Activated CD8-positive, alpha-beta T cell treated with anti-CD3 and anti-CD28 coated beads for 36 hours (primary cell): ENCODE measurements at regions of chr11 and their contacts with region 1.

Region 1: GRCh38 chr11:46529095-46529905 is 64.5 kb downstream of the AMBRA1 start:
- DNase-seq: peak; percentile 94
- ATAC-seq: peak; percentile 99
- H3K4me3 Mint-ChIP-seq: no peak overlapping the region
- H3K27ac Mint-ChIP-seq: peak overlapping the region; percentile 37
- H3K4me1 Mint-ChIP-seq: peaks cover 33% of the 10 kb centered on the region
- H3K27me3 Mint-ChIP-seq: no peaks in the 10 kb centered on the region
- CTCF ChIP-seq: peak; percentile 89

Region 2: GRCh38 chr11:46392421-46393230 is 136.7 kb before region 1 on chr11:
- CTCF ChIA-PET with region 1: interaction called, 25 read pairs
- POLR2A ChIA-PET with region 1: no interaction called
- intact Hi-C with region 1: no loop called
- DNase-seq: peak; percentile 81
- ATAC-seq: peak; percentile 85
- H3K4me3 Mint-ChIP-seq: peak overlapping the region; percentile 65
- H3K27ac Mint-ChIP-seq: no peak overlapping the region
- H3K4me1 Mint-ChIP-seq: peaks cover 24% of the 10 kb centered on the region
- H3K27me3 Mint-ChIP-seq: peaks cover 41% of the 10 kb centered on the region
- CTCF ChIP-seq: no peak

Region 3: GRCh38 chr11:46489661-46490560 is 39.4 kb before region 1 on chr11:
- CTCF ChIA-PET with region 1: interaction called, 51 read pairs
- POLR2A ChIA-PET with region 1: interaction called, 4 read pairs
- intact Hi-C with region 1: loop called (anchors 5 kb)
- DNase-seq: peak; percentile 54
- ATAC-seq: peak; percentile 76
- H3K4me3 Mint-ChIP-seq: no peak overlapping the region
- H3K27ac Mint-ChIP-seq: no peak overlapping the region
- H3K4me1 Mint-ChIP-seq: peaks cover 3% of the 10 kb centered on the region
- H3K27me3 Mint-ChIP-seq: no peaks in the 10 kb centered on the region
- CTCF ChIP-seq: peak; percentile 71

Region 4: DNA sequence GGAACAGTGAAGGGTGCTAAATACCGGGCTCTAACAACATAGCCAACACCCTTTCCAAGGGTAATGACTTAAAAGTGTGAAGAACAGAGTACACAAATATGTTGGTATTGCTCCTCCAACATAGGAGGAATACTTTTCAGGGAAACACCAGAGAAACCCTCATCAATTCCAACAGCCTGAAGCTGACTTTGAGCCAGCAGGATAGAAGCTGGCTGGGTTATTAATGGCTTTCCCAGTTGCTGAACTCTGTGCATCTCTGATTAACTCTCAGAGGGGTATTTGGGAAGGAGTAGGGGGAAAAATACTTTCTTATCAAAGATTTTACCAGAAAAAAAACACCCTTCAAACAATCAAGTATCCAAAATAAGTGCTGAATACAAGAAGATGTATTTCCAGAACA is 31.1 kb before region 1 on chr11:
- CTCF ChIA-PET with region 1: interaction called, 51 read pairs
- POLR2A ChIA-PET with region 1: no interaction called
- intact Hi-C with region 1: loop called (anchors 5 kb)
- DNase-seq: no peak
- ATAC-seq: no peak
- H3K4me3 Mint-ChIP-seq: no peak overlapping the region
- H3K27ac Mint-ChIP-seq: no peak overlapping the region
- H3K4me1 Mint-ChIP-seq: no peaks in the 10 kb centered on the region
- H3K27me3 Mint-ChIP-seq: no peaks in the 10 kb centered on the region
- CTCF ChIP-seq: no peak

Region 5: DNA sequence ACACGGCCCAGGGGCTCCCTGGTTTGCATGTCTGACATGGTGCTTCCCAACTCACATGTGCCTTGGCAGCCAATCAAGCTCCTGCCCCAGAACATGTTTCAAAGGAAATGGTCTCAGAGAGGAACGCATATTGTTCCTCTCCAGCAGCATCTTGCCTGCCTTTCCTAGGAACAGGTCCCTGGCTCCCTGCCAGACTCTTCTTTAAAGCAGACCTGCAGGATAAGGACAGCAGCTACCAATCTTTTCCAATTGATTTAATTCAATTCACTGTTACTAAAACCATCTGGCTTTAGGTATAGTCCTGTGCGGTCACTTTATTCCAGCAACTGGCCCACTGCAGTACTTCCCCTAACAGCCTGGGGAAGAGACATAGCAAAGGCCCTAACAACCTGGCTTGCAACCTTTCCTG is 15.4 kb before region 1 on chr11:
- CTCF ChIA-PET with region 1: interaction called, 12 read pairs
- POLR2A ChIA-PET with region 1: no interaction called
- intact Hi-C with region 1: no loop called
- DNase-seq: no peak
- ATAC-seq: no peak
- H3K4me3 Mint-ChIP-seq: no peak overlapping the region
- H3K27ac Mint-ChIP-seq: no peak overlapping the region
- H3K4me1 Mint-ChIP-seq: peaks cover 7% of the 10 kb centered on the region
- H3K27me3 Mint-ChIP-seq: no peaks in the 10 kb centered on the region
- CTCF ChIP-seq: no peak

Region 6: GRCh38 chr11:46554205-46555055 is 25.1 kb after region 1 on chr11:
- CTCF ChIA-PET with region 1: interaction called, 13 read pairs
- POLR2A ChIA-PET with region 1: interaction called, 3 read pairs
- intact Hi-C with region 1: no loop called
- DNase-seq: no peak
- ATAC-seq: no peak
- H3K4me3 Mint-ChIP-seq: no peak overlapping the region
- H3K27ac Mint-ChIP-seq: peak overlapping the region; percentile 3
- H3K4me1 Mint-ChIP-seq: peaks cover 47% of the 10 kb centered on the region
- H3K27me3 Mint-ChIP-seq: no peaks in the 10 kb centered on the region
- CTCF ChIP-seq: no peak

Region 7: DNA sequence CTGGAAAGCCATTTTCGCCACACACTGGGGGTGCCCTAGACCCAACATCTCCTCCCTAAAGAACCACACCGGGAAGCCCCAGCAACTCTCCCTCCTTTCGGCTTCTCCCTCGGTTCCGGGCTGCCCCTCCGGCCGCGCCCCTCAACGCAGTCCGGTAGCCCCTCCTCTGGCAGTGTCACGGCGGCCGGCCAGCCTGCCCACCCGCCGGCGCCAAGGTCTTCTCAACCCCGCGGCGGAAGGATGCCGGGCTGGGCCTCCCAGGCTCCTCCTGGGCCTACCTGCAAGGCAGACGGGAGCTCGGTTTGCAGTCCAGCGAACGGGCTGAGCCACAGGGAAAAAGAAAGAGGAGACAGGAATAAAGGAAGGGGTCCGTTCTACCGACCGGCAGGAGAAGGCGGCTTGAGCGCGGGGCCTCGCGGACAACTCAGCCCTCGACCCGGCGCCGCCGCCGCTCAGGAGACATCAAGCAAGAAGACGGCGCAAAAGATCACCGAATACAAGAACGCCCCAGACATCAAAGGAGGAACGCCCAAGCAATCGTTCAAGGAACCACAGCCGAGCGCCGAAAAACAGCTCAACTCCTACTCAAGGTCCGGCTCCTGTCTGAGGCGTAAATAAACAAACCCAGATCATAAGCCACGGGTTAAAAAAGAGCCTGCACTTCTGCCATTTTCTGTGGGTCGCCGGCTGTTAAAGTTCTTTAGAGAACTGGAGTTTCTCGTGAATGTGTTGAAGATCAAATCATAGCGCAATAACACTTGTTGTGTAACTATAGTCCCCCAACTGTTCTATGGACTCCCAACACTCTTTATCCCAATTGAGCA is 64.5 kb after region 1 on chr11 and contains the start of gene AMBRA1:
- CTCF ChIA-PET with region 1: interaction called, 11 read pairs
- POLR2A ChIA-PET with region 1: no interaction called
- intact Hi-C with region 1: no loop called
- DNase-seq: peak; percentile 95
- ATAC-seq: peak; percentile 92
- H3K4me3 Mint-ChIP-seq: peak within 1 kb of the TSS; percentile 97
- H3K27ac Mint-ChIP-seq: peak within 1 kb of the TSS; percentile 95
- H3K4me1 Mint-ChIP-seq: peaks cover 36% of the 10 kb centered on the region
- H3K27me3 Mint-ChIP-seq: no peaks in the 10 kb centered on the region
- CTCF ChIP-seq: no peak
- total RNA-seq, gene AMBRA1: 24.0 to 24.1 TPM

Region 8: GRCh38 chr11:46603704-46604308 is 74.5 kb after region 1 on chr11:
- CTCF ChIA-PET with region 1: no interaction called
- POLR2A ChIA-PET with region 1: no interaction called
- intact Hi-C with region 1: no loop called
- DNase-seq: no peak
- ATAC-seq: no peak
- H3K4me3 Mint-ChIP-seq: no peak overlapping the region
- H3K27ac Mint-ChIP-seq: no peak overlapping the region
- H3K4me1 Mint-ChIP-seq: no peaks in the 10 kb centered on the region
- H3K27me3 Mint-ChIP-seq: no peaks in the 10 kb centered on the region
- CTCF ChIP-seq: no peak

Region 9: GRCh38 chr11:46677991-46678740 is 148.9 kb after region 1 on chr11:
- CTCF ChIA-PET with region 1: no interaction called
- POLR2A ChIA-PET with region 1: no interaction called
- intact Hi-C with region 1: no loop called
- DNase-seq: no peak
- ATAC-seq: peak; percentile 29
- H3K4me3 Mint-ChIP-seq: no peak overlapping the region
- H3K27ac Mint-ChIP-seq: no peak overlapping the region
- H3K4me1 Mint-ChIP-seq: peaks cover 34% of the 10 kb centered on the region
- H3K27me3 Mint-ChIP-seq: no peaks in the 10 kb centered on the region
- CTCF ChIP-seq: no peak